GM12878 (cell line): ENCODE measurements at regions of chr17 and their contacts with region 1.

Region 1: GRCh38 chr17:43483674-43484372 is at the start of gene DHX8:
- DNase-seq: peak; percentile 97
- ATAC-seq: peak; percentile 96
- H3K4me3 ChIP-seq: peak within 1 kb of the TSS; percentile 93
- H3K27ac ChIP-seq: peak within 1 kb of the TSS; percentile 96
- H3K4me1 ChIP-seq: peaks cover 13% of the 10 kb centered on the region
- H3K27me3 ChIP-seq: no peaks in the 10 kb centered on the region
- CTCF ChIP-seq: peak; percentile 100; a peak in 5 of 6 replicates
- EP300 ChIP-seq: peak in 1 of 2 experiments; percentile 43; a peak in 1 of 4 replicates
- POLR2A ChIP-seq: peak; percentile 91
- RAD21 ChIP-seq: peak; percentile 99
- polyA plus RNA-seq, gene DHX8: 27.6 to 31.6 TPM

Region 2: DNA sequence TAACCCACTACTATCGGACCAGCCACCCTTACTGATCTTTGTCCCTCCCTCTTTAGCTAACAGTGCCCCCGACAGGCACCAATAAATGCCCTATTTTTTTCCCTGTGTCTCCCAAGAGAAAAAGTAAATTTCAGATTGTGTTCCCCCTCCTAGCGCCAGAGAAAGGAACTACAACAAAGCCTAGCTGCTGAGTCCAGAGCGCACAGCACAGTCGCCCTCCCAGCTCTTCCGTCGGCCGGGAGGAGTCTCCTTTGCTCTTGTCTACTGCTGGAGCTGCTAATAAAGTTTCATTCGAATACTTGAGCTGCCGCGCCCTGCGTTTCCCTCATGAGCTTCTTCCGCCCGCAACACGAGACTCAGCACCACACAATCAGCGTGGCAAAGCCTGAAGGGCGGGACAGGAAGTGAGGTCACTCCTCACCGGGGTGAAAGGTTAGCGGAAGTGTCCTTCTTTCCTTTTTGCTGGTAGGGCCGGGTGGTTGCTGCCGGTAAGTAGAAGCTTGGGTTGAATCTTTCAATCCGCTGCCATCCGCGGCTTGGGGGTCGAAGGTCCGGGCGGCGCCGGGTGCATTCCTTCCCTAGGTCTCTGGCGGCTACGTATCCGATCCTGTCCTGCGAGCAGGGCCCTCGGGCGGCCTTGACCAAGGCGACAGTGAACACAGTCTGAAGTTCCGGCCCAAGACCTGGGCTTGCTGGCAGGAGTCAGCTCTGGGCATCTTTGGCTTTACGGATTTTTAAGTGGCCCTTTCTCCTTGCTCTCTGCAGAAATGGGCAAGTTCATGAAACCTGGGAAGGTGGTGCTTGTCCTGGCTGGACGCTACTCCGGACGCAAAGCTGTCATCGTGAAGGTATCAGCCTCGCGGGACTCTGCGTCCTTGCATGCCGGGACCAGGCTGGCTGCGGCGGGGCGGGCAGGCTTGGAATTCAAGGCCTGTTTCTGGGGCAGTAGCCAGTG is 485.6 kb before region 1 on chr17 and contains the start of gene RPL27:
- CTCF ChIA-PET with region 1: interaction called, 10 read pairs
- POLR2A ChIA-PET with region 1: interaction called, 3 read pairs
- RAD21 ChIA-PET with region 1: interaction called, 9 read pairs
- SMC1A ChIA-PET with region 1: interaction called, 5 read pairs
- in situ Hi-C with region 1: no loop called
- intact Hi-C with region 1: no loop called
- DNase-seq: peak; percentile 100
- ATAC-seq: peak; percentile 97
- H3K4me3 ChIP-seq: peak within 1 kb of the TSS; percentile 95
- H3K27ac ChIP-seq: peak within 1 kb of the TSS; percentile 82
- H3K4me1 ChIP-seq: peaks cover 3% of the 10 kb centered on the region; the same call in 1 of the 2 replicates
- H3K27me3 ChIP-seq: no peaks in the 10 kb centered on the region
- CTCF ChIP-seq: peak; percentile 83 to 89 (median 88)
- EP300 ChIP-seq: peak in 1 of 2 experiments; percentile 73; a peak in 2 of 4 replicates
- POLR2A ChIP-seq: peak; percentile 95
- RAD21 ChIP-seq: peak; percentile 60
- polyA plus RNA-seq, gene RPL27: 4,376 to 4,686 TPM

Region 3: DNA sequence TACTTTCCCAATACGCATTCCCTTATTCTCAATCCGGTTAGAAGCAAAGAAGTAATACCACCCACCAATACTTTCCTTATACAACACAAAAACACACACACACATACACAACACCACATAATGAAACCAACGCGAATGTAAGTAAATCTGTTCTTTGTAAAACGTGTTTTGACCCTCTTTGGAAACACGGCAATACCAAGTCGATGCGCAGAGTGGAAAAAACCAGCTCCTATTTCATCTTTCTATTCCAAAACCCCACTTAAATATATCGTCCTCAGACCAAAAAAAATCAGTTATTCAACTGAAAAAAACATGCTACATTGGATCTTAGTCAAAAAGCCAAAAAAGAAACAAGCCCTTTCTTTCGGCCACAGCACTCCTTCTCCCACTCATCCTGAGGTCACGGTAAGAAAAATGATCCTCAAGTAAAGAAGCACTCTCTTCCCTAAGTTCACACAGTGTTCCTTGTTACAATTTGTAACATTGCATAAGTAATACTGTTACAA is 116.0 kb before region 1 on chr17:
- CTCF ChIA-PET with region 1: interaction called, 25 read pairs
- POLR2A ChIA-PET with region 1: interaction called, 12 read pairs
- RAD21 ChIA-PET with region 1: interaction called, 43 read pairs
- SMC1A ChIA-PET with region 1: interaction called, 23 read pairs
- in situ Hi-C with region 1: no loop called
- intact Hi-C with region 1: loop called (anchors 1 kb)
- DNase-seq: peak; percentile 91
- ATAC-seq: peak; percentile 67
- H3K4me3 ChIP-seq: peak overlapping the region; percentile 62; the same call in 1 of the 2 replicates
- H3K27ac ChIP-seq: peak overlapping the region; percentile 99
- H3K4me1 ChIP-seq: peaks cover 44% of the 10 kb centered on the region
- H3K27me3 ChIP-seq: no peaks in the 10 kb centered on the region
- CTCF ChIP-seq: no peak
- EP300 ChIP-seq: no peak
- POLR2A ChIP-seq: peak; percentile 99
- RAD21 ChIP-seq: no peak

Region 4: GRCh38 chr17:43393944-43394482 is 89.8 kb before region 1 on chr17:
- CTCF ChIA-PET with region 1: interaction called, 248 read pairs
- POLR2A ChIA-PET with region 1: interaction called, 10 read pairs
- RAD21 ChIA-PET with region 1: interaction called, 79 read pairs
- SMC1A ChIA-PET with region 1: interaction called, 117 read pairs
- in situ Hi-C with region 1: loop called (anchors 5 kb)
- intact Hi-C with region 1: loop called (anchors 1 kb)
- DNase-seq: no peak
- ATAC-seq: peak; percentile 78
- H3K4me3 ChIP-seq: no peak overlapping the region
- H3K27ac ChIP-seq: no peak overlapping the region
- H3K4me1 ChIP-seq: peaks cover 4% of the 10 kb centered on the region
- H3K27me3 ChIP-seq: no peaks in the 10 kb centered on the region
- CTCF ChIP-seq: peak; percentile 81 to 89 (median 86)
- EP300 ChIP-seq: no peak
- POLR2A ChIP-seq: no peak
- RAD21 ChIP-seq: peak; percentile 95

Region 5: DNA sequence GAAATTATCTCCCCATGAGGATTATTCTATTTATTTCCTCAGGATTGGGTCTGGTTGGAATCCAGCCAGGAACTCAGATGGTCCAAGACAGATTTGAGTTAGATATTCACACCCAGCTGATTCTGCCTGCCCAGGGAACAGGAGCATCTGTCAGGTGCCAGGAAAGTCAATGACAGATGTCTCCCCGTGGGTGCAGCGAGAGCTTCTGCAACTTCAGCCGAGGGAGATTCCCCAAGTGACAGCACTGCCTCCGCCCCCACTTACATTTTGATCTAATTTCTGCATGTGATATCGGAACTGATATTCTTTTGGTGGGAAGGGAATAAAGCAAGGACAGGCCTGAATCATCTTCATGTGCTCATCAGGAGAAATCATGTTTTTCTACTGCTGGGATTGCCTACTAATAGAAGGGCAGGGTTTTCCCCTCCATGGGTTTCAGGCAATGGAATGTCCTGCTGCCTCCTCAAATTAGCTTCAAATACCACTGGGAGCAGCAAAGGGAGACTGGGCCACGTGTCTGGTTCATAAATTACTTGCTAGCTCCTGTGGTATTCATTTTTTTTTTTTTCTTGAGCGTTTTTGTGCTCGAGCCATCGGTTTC is 15.7 kb before region 1 on chr17:
- CTCF ChIA-PET with region 1: interaction called, 20 read pairs
- POLR2A ChIA-PET with region 1: no interaction called
- RAD21 ChIA-PET with region 1: no interaction called
- SMC1A ChIA-PET with region 1: no interaction called
- in situ Hi-C with region 1: no loop called
- intact Hi-C with region 1: no loop called
- DNase-seq: no peak
- ATAC-seq: no peak
- H3K4me3 ChIP-seq: no peak overlapping the region
- H3K27ac ChIP-seq: no peak overlapping the region
- H3K4me1 ChIP-seq: no peaks in the 10 kb centered on the region
- H3K27me3 ChIP-seq: no peaks in the 10 kb centered on the region
- CTCF ChIP-seq: no peak
- EP300 ChIP-seq: no peak
- POLR2A ChIP-seq: no peak
- RAD21 ChIP-seq: no peak

Region 6: DNA sequence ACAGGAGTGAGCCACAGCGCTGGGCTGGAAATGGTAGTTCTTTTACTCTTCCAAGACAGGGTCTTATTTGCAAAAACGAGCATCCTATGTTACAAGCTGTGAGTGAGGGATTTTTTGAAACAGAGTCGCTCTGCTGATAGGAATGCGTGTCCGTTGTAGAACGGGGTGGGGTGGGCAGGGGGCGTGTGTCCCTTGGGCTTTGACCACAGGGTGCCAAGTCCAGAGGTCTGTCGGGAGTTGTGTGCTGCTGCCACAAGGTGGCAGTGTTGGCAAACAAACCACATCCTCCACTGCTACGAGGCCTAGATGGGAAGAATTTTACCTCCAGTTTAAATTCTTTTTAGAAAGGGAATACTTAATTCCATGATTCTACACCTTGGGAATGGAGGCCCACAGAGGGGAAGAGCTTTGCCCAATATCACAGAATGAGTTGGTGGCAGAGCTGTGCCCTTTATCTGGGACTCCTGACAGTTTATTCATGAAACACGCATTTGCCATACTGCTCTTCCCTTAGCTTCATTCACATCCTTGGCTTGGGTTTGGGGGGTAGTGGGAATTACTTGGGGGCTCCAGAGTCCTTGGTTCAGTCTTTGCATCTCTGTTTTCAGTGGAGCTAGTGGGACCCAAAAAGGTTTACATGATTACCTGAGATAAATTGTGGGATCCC is 92.9 kb after region 1 on chr17:
- CTCF ChIA-PET with region 1: interaction called, 44 read pairs
- POLR2A ChIA-PET with region 1: no interaction called
- RAD21 ChIA-PET with region 1: interaction called, 46 read pairs
- SMC1A ChIA-PET with region 1: interaction called, 43 read pairs
- in situ Hi-C with region 1: no loop called
- intact Hi-C with region 1: no loop called
- DNase-seq: peak; percentile 49
- ATAC-seq: peak; percentile 66
- H3K4me3 ChIP-seq: no peak overlapping the region
- H3K27ac ChIP-seq: no peak overlapping the region
- H3K4me1 ChIP-seq: peaks cover 18% of the 10 kb centered on the region
- H3K27me3 ChIP-seq: no peaks in the 10 kb centered on the region
- CTCF ChIP-seq: peak; percentile 81 to 85 (median 82)
- EP300 ChIP-seq: no peak
- POLR2A ChIP-seq: no peak
- RAD21 ChIP-seq: peak; percentile 92

Region 7: DNA sequence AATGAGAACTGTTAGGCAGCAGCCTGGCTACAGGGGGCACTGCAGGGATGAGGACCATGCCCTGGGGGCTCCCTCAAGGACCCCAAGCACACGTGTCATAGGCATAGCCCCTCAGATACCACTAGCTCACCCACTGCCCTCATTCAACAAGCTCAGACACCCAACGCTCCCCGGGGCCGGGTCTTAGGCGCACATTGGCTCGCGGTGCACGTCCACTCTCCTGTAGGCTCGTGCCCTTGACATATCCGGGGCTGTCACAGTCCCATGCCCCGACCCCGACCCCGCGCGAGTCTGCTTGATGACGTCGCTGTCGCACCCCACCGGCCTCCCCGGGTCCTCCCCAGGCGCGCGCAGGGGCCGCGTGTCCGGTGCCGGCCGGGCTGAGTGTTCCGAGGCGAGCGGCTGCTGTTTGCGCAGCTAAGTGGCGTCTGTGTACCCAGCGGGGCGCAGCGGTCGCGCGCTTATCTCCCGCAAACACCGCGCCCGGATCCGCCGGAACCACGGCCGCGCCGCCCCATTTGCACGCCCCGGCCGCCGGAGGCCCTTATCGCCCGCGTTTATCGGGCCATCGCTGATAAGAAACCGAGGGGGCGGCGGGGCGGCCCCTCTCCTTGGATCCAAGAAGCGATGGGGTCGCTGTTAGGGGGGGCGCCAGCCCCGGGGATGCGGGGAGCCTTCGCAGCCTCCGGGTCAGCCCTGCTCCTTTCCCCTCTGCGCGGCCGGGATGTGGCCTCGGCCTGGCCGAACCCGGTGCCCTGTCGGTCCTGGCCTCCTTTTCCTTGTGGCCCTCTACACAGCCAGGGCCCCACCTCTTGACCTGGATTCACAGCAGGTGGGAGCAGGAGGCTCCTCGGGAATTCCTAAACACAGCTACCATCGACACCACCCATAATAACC is 499.9 kb after region 1 on chr17:
- CTCF ChIA-PET with region 1: no interaction called
- POLR2A ChIA-PET with region 1: no interaction called
- RAD21 ChIA-PET with region 1: no interaction called
- SMC1A ChIA-PET with region 1: no interaction called
- in situ Hi-C with region 1: no loop called
- intact Hi-C with region 1: no loop called
- DNase-seq: no peak
- ATAC-seq: no peak
- H3K4me3 ChIP-seq: no peak overlapping the region
- H3K27ac ChIP-seq: no peak overlapping the region
- H3K4me1 ChIP-seq: no peaks in the 10 kb centered on the region
- H3K27me3 ChIP-seq: peaks cover 5 to 21% of the 10 kb centered on the region in 2 experiments
- CTCF ChIP-seq: 0 out of 6 replicates have a peak, but pooled peaks of 1 of the 3 experiments have one; percentile 1
- EP300 ChIP-seq: no peak
- POLR2A ChIP-seq: no peak
- RAD21 ChIP-seq: no peak